ENCODE measurements at regions of chr14 and their contacts with region 1.

Region 1: DNA sequence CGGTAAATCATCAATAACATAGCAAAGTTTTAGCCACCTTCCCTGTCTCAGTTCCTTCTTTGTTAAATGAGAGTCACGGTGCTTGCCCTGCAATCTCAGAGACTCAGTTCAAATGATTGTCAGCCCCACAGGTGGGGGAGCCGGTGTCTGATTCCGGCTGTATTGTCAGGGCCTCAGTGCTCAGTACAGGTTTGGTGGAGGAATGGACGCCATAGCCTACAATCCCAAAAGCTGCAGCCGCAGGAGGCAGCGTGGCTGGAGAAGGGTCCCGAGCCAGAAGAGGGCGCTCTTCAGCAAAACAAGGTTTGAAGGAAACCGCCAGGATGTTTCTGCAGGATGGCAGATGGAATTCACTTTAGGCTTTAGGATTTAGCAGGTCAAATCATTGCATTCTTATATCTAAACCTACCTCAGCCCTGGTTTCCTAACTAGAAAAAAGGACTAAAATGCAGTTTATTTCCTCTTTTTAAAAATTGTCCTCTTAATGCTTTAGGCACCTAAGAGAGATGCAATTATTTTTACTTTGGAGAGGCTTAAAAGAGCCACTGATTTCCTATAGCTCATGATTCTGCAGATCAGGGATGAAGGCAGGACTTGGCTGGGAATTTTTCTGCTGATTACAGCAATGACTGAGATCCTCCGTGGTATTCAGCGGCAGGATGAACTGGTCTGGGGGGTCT is 29.2 kb downstream of the FOS start:
- DNase-seq: peak; percentile 94
- ATAC-seq: peak; percentile 74
- H3K4me3 Mint-ChIP-seq: no peak overlapping the region
- H3K27ac Mint-ChIP-seq: no peak overlapping the region
- H3K4me1 Mint-ChIP-seq: peaks cover 16% of the 10 kb centered on the region
- H3K27me3 Mint-ChIP-seq: no peaks in the 10 kb centered on the region
- CTCF ChIP-seq: peak; percentile 66

Region 2: GRCh38 chr14:75175677-75176141 is 132.1 kb before region 1 on chr14:
- CTCF ChIA-PET with region 1: no interaction called
- POLR2A ChIA-PET with region 1: no interaction called
- DNase-seq: no peak
- ATAC-seq: no peak
- H3K4me3 Mint-ChIP-seq: peak overlapping the region; percentile 89
- H3K27ac Mint-ChIP-seq: peak overlapping the region; percentile 89
- H3K4me1 Mint-ChIP-seq: peaks cover 15% of the 10 kb centered on the region
- H3K27me3 Mint-ChIP-seq: peaks cover 8% of the 10 kb centered on the region
- CTCF ChIP-seq: no peak

Region 3: GRCh38 chr14:75230140-75231045 is 77.4 kb before region 1 on chr14:
- CTCF ChIA-PET with region 1: no interaction called
- POLR2A ChIA-PET with region 1: no interaction called
- DNase-seq: no peak
- ATAC-seq: peak; percentile 84
- H3K4me3 Mint-ChIP-seq: no peak overlapping the region
- H3K27ac Mint-ChIP-seq: no peak overlapping the region
- H3K4me1 Mint-ChIP-seq: peaks cover 27% of the 10 kb centered on the region
- H3K27me3 Mint-ChIP-seq: no peaks in the 10 kb centered on the region; the same call in 1 of the 2 replicates
- CTCF ChIP-seq: no peak

Region 4: DNA sequence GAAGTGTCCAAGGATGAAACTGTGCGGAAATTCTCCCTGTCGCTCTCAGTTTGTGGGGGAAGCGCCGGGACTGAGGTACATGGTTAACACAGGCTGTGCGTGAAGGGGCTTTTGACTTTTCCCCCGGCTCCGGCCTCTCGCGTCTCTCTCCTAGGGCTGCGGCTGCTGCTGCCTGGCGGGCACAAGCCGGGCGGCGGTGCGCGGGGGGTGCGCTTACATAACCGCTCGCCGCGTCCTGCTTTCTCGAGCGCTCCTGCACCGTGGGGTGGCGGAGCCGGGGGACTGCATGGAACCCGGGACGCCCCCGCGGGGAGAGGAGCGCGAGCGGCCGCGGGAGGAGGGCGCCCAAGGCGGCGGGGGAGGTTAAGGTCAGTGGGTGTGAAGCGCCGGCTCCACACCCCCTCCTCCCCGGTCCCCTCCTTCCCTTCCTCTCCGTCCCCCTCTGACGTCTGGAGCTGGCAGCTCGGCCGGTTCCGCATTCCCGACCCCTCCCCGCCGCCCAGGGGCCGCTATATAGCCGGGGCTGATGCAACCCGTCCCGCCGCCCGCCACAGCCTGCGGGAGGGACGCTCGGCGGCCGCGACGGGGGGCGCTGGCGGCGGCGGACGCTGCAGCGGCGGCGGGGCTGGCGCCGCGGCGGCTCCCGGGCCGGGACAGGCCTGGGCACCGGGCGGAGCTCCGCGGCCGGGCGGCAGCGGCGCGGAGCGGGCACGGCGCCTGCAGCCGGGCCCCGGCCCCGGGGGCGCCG is 119.8 kb after region 1 on chr14 and contains the start of gene JDP2:
- CTCF ChIA-PET with region 1: interaction called, 17 read pairs
- POLR2A ChIA-PET with region 1: no interaction called
- DNase-seq: peak; percentile 82
- ATAC-seq: peak; percentile 71
- H3K4me3 Mint-ChIP-seq: peak within 1 kb of the TSS; percentile 73
- H3K27ac Mint-ChIP-seq: no peak within 1 kb of the TSS
- H3K4me1 Mint-ChIP-seq: peaks cover 31% of the 10 kb centered on the region
- H3K27me3 Mint-ChIP-seq: peaks cover 29% of the 10 kb centered on the region
- CTCF ChIP-seq: no peak
- total RNA-seq, gene JDP2: 17.9 to 23.3 TPM (median 21.8 TPM) in 3 replicates

Region 5: GRCh38 chr14:75452900-75453747 is 145.3 kb after region 1 on chr14:
- CTCF ChIA-PET with region 1: interaction called, 46 read pairs
- POLR2A ChIA-PET with region 1: interaction called, 9 read pairs
- DNase-seq: peak; percentile 84
- ATAC-seq: peak; percentile 89
- H3K4me3 Mint-ChIP-seq: 0 out of 2 replicates have a peak overlapping the region, but pooled peaks have one; percentile 25
- H3K27ac Mint-ChIP-seq: peak overlapping the region; percentile 100
- H3K4me1 Mint-ChIP-seq: peaks cover 70% of the 10 kb centered on the region
- H3K27me3 Mint-ChIP-seq: no peaks in the 10 kb centered on the region
- CTCF ChIP-seq: no peak

Region 6: DNA sequence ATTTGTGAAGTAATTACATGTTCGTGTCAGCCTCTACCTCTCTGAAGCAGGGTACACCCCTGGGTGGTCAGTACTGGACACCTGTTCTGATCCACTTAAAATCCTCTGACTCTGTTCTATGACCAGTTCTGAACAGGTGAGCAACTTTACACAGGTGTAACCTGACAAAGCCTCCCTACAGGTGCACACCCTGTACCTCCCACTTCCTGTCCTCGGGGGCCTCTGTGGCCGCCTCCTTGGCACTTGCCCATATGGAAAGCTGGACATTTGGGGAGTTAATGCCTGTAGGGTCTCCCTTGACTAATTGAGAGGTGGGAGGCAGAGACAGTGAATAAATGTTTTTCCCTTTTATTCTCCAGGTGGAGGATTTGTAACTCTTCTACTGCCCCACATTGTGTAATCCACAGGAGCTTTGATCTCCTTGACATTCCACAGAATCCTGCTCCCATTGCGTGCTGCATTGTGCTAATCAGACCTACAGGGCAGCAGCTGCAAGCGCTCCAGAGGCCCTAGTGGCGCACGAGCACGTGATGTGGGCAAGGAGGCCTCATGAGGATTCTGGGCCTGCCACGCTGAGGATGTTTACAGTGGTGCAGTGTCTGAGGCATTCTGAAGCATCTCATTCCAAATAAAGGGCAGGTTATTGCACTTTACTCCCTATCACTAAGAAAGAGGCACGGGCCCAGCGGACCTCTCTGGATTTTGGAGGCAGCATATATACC is 168.6 kb after region 1 on chr14:
- CTCF ChIA-PET with region 1: interaction called, 11 read pairs
- POLR2A ChIA-PET with region 1: interaction called, 3 read pairs
- DNase-seq: peak; percentile 44
- ATAC-seq: peak; percentile 56
- H3K4me3 Mint-ChIP-seq: no peak overlapping the region
- H3K27ac Mint-ChIP-seq: 0 out of 2 replicates have a peak overlapping the region, but pooled peaks have one; percentile 18
- H3K4me1 Mint-ChIP-seq: peaks cover 33% of the 10 kb centered on the region
- H3K27me3 Mint-ChIP-seq: no peaks in the 10 kb centered on the region; the same call in 1 of the 2 replicates
- CTCF ChIP-seq: no peak

Measured in WTC11 (cell line).